ENCODE measurements at regions of chr4 and their contacts with region 1.

Region 1: DNA sequence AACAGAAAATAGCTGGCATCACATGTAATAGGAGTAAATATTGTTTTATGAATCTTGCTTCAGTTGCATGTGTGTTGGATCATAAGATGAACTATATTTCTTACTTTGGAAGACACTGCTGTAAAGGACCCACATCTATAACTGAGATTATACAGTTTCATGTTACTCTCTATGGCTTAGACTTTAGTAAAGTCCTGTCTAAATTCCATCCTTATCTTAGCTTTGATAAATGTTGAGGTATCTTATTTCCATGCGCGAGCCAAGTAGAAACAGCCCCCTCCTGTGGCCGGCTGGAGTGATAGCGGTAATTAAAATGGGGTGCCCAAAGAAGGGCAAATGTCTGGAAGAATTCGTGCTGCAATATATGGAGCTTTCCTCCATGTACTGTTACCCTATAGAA is 43.0 kb downstream of the CCDC158 start:
- DNase-seq: peak; percentile 44
- ATAC-seq: peak; percentile 81
- H3K4me3 ChIP-seq: no peak overlapping the region
- H3K27ac ChIP-seq: no peak overlapping the region
- H3K4me1 ChIP-seq: peaks cover 26% of the 10 kb centered on the region
- H3K27me3 ChIP-seq: no peaks in the 10 kb centered on the region
- CTCF ChIP-seq: peak; percentile 65
- EP300 ChIP-seq: no peak
- POLR2A ChIP-seq: no peak
- RAD21 ChIP-seq: peak; percentile 76

Region 2: DNA sequence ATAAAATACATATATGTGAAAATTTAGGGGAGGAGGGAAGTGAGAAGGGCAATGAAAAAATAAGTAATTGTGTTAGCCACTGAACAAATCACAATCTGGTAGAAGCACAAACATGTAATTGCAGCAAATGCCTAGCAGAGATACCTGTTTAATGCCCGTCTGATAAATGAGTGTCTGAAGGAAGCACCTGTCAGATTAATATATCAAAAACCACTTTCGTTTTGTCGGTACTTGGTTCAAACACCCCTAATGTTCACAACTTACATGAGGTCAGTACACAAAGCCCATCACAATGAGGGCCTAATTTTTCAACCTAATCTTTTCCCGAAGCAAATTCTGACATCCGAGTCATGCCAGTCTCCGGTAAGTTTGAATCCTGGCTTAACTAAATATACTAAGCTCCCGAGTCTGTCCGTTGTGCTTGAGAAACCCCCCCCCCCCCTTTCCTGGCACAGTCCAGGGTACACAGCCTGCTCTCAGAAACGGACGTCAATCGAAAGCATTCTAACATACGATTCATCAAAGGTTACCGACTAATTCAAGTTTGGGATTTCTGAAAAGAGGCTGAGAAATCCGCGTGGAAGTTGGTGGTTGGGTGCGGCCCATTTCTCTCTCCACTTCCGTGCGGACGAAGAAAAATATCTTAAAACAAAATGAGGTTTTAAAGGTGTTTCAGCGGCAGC is 387.9 kb before region 1 on chr4:
- CTCF ChIA-PET with region 1: no interaction called
- POLR2A ChIA-PET with region 1: no interaction called
- in situ Hi-C with region 1: no loop called
- intact Hi-C with region 1: loop called (anchors 5 kb)
- DNase-seq: peak; percentile 3
- ATAC-seq: peak; percentile 60
- H3K4me3 ChIP-seq: peak overlapping the region; percentile 78 to 97 (median 87)
- H3K27ac ChIP-seq: peak overlapping the region; percentile 78
- H3K4me1 ChIP-seq: peaks cover 28% of the 10 kb centered on the region
- H3K27me3 ChIP-seq: no peaks in the 10 kb centered on the region
- CTCF ChIP-seq: no peak
- EP300 ChIP-seq: no peak
- POLR2A ChIP-seq: no peak
- RAD21 ChIP-seq: no peak

Region 3: GRCh38 chr4:76179398-76180318 is 198.3 kb before region 1 on chr4:
- CTCF ChIA-PET with region 1: interaction called, 44 read pairs
- POLR2A ChIA-PET with region 1: interaction called, 3 read pairs
- in situ Hi-C with region 1: loop called (anchors 5 kb)
- intact Hi-C with region 1: loop called (anchors 1 kb)
- DNase-seq: peak; percentile 70
- ATAC-seq: peak; percentile 99
- H3K4me3 ChIP-seq: no peak overlapping the region
- H3K27ac ChIP-seq: no peak overlapping the region
- H3K4me1 ChIP-seq: no peaks in the 10 kb centered on the region
- H3K27me3 ChIP-seq: no peaks in the 10 kb centered on the region
- CTCF ChIP-seq: peak; percentile 91
- EP300 ChIP-seq: no peak
- POLR2A ChIP-seq: no peak
- RAD21 ChIP-seq: peak; percentile 84

Region 4: GRCh38 chr4:76251441-76252270 is 126.3 kb before region 1 on chr4 and contains the start of gene FAM47E:
- CTCF ChIA-PET with region 1: interaction called, 28 read pairs
- POLR2A ChIA-PET with region 1: no interaction called
- in situ Hi-C with region 1: loop called (anchors 10 kb)
- intact Hi-C with region 1: loop called (anchors 1 kb)
- DNase-seq: peak; percentile 57
- ATAC-seq: peak; percentile 99
- H3K4me3 ChIP-seq: peak within 1 kb of the TSS; percentile 39 to 69 (median 51)
- H3K27ac ChIP-seq: no peak within 1 kb of the TSS
- H3K4me1 ChIP-seq: peaks cover 13% of the 10 kb centered on the region
- H3K27me3 ChIP-seq: no peaks in the 10 kb centered on the region; a peak in 1 of 5 replicates
- CTCF ChIP-seq: peak; percentile 85
- EP300 ChIP-seq: no peak; a peak in 1 of 4 replicates
- POLR2A ChIP-seq: no peak
- RAD21 ChIP-seq: peak; percentile 96
- total RNA-seq, gene FAM47E: 0.29 and 0.33 TPM in 2 replicates

Region 5: DNA sequence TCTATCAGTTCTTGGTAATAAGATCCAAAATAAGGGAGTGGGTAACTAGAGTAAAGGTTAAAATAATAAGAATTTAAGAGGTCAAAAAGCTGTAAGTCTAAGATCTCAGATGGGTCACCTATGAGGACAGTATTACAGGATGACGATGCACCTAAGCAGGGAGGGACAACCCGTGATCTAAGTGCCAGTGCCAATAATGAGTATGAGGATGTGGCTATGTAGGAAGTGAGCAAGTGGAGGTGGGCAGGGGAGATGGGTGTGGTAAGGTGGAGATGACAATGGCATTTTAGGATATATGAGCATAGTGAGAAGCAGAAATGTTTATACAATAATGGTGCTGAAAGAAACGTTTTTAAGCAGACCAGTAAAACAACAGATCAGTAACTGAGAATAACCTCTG is 23.7 kb after region 1 on chr4:
- CTCF ChIA-PET with region 1: no interaction called
- POLR2A ChIA-PET with region 1: no interaction called
- in situ Hi-C with region 1: no loop called
- intact Hi-C with region 1: no loop called
- DNase-seq: no peak
- ATAC-seq: no peak
- H3K4me3 ChIP-seq: no peak overlapping the region
- H3K27ac ChIP-seq: no peak overlapping the region
- H3K4me1 ChIP-seq: no peaks in the 10 kb centered on the region
- H3K27me3 ChIP-seq: no peaks in the 10 kb centered on the region; a peak in 1 of 5 replicates
- CTCF ChIP-seq: no peak
- EP300 ChIP-seq: no peak
- POLR2A ChIP-seq: no peak
- RAD21 ChIP-seq: no peak

Measured in HepG2 (cell line).